Left lung (tissue), 14 donors: ENCODE measurements at regions of chrX and their contacts with region 1.

Region 1: DNA sequence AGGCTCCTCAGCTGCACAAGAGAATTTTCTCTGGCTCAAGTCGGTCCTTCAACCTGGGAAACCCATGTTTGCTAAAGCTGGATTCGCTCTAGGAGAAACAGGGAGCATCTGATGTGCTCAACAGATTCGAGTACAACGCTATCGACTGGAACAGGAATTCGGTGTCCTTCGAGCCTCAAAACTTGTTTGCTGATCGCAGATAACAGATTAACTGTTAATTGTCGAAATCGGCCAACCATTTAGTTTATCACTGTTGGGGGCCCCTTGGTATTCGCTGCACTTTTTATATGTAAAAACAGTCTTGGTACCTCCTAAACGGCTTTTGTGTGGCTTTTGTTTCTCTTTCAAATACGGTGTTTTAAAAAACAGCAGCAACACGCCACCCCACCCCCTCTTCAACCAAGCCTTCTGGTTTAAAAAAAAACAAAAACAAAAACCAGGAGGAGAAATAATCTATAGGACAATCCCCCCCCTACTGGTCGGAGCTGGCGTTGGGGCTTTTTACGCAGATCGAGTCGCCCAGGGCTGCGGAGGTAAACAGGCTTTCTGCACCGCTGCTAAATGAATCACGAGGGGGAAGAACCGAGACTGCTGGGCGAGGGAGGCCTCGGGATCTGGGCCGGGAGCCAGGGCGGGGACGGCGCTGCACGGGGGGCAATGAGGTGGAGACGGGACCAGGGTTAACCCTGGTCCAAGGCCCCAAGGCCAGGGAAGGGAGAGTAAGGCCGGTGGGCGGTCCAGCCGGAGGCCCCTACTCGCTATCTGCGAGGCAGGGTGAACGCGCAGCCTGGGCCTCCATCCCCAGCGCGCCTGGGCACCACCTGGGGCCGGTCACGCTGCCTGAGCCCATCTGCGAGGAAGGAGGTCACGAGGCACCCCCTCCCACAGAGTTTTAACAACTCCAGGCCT is 71.7 kb upstream of the BCOR start:
- DNase-seq: peak in 2 of 4 donors; percentile 71 to 77
- ATAC-seq: peak; percentile 16
- H3K4me3 ChIP-seq: no peak overlapping the region
- H3K27ac ChIP-seq: no peak overlapping the region
- H3K4me1 ChIP-seq: peaks cover 3 to 55% of the 10 kb centered on the region in 2 donors
- H3K27me3 ChIP-seq: peaks cover 0 to 43% of the 10 kb centered on the region in 2 donors
- CTCF ChIP-seq: peak; percentile 10 to 20

Region 2: GRCh38 chrX:39796856-39797255 is 372.6 kb before region 1 on chrX:
- intact Hi-C with region 1: no loop called
- DNase-seq: no peak
- ATAC-seq: no peak
- H3K4me3 ChIP-seq: no peak overlapping the region
- H3K27ac ChIP-seq: no peak overlapping the region
- H3K4me1 ChIP-seq: no peaks in the 10 kb centered on the region
- H3K27me3 ChIP-seq: no peaks in the 10 kb centered on the region
- CTCF ChIP-seq: no peak

Region 3: GRCh38 chrX:40013266-40014195 is 155.9 kb before region 1 on chrX:
- intact Hi-C with region 1: loop called in 1 of 2 experiments (anchors 10 kb)
- DNase-seq: peak in 3 of 4 donors; percentile 64 to 82 (median 70)
- ATAC-seq: peak; percentile 63
- H3K4me3 ChIP-seq: peak overlapping the region; percentile 31 to 47
- H3K27ac ChIP-seq: peak overlapping the region; percentile 76 to 80
- H3K4me1 ChIP-seq: peaks cover 0 to 35% of the 10 kb centered on the region in 2 donors
- H3K27me3 ChIP-seq: peaks cover 40 to 49% of the 10 kb centered on the region in 2 donors
- CTCF ChIP-seq: no peak

Region 4: GRCh38 chrX:40207626-40208025 is 38.2 kb after region 1 on chrX:
- intact Hi-C with region 1: no loop called
- DNase-seq: no peak
- ATAC-seq: no peak
- H3K4me3 ChIP-seq: no peak overlapping the region
- H3K27ac ChIP-seq: no peak overlapping the region
- H3K4me1 ChIP-seq: no peaks in the 10 kb centered on the region
- H3K27me3 ChIP-seq: no peaks in the 10 kb centered on the region
- CTCF ChIP-seq: no peak